ENCODE measurements at regions of chr16 and their contacts with region 1.

Region 1: GRCh38 chr16:11742539-11743307 is at the start of gene TXNDC11:
- DNase-seq: peak; percentile 99
- ATAC-seq: peak; percentile 81 to 82
- H3K4me3 ChIP-seq: peak within 1 kb of the TSS; percentile 77 to 99 (median 95)
- H3K27ac ChIP-seq: peak within 1 kb of the TSS; percentile 95 to 100 (median 99)
- H3K4me1 ChIP-seq: peaks cover 33 to 42% of the 10 kb centered on the region in 2 donors
- H3K27me3 ChIP-seq: no peaks in the 10 kb centered on the region
- CTCF ChIP-seq: no peak
- POLR2A ChIP-seq: peak; percentile 99 to 100
- total RNA-seq, gene TXNDC11: 35.2 to 64.5 (median 51.2) TPM

Region 2: GRCh38 chr16:11497851-11498289 is 244.9 kb before region 1 on chr16:
- in situ Hi-C with region 1: no loop called
- intact Hi-C with region 1: loop called (anchors 5 kb)
- DNase-seq: peak in 1 of 2 donors; percentile 59
- ATAC-seq: no peak
- H3K4me3 ChIP-seq: no peak overlapping the region
- H3K27ac ChIP-seq: peak overlapping the region; percentile 84 to 96 (median 92)
- H3K4me1 ChIP-seq: peaks cover 33 to 34% of the 10 kb centered on the region in 2 donors
- H3K27me3 ChIP-seq: no peaks in the 10 kb centered on the region
- CTCF ChIP-seq: no peak
- POLR2A ChIP-seq: no peak

Region 3: GRCh38 chr16:11667824-11668622 is 74.7 kb before region 1 on chr16 and contains the start of gene SNN:
- in situ Hi-C with region 1: no loop called
- intact Hi-C with region 1: loop called (anchors 2 kb)
- DNase-seq: peak; percentile 78 to 88
- ATAC-seq: peak; percentile 57 to 60
- H3K4me3 ChIP-seq: peak within 1 kb of the TSS; percentile 79 to 99 (median 88)
- H3K27ac ChIP-seq: peak within 1 kb of the TSS; percentile 91 to 99 (median 97)
- H3K4me1 ChIP-seq: peaks cover 36 to 41% of the 10 kb centered on the region in 2 donors
- H3K27me3 ChIP-seq: no peaks in the 10 kb centered on the region
- CTCF ChIP-seq: no peak
- POLR2A ChIP-seq: peak; percentile 67 to 73
- total RNA-seq, gene SNN: 22.5 to 94.5 (median 78.1) TPM

Region 4: GRCh38 chr16:11675561-11676511 is 66.9 kb before region 1 on chr16:
- in situ Hi-C with region 1: no loop called
- intact Hi-C with region 1: loop called (anchors 2 kb)
- DNase-seq: peak; percentile 95 to 99
- ATAC-seq: peak; percentile 65 to 75
- H3K4me3 ChIP-seq: no peak overlapping the region
- H3K27ac ChIP-seq: peak overlapping the region; percentile 91 to 99 (median 97)
- H3K4me1 ChIP-seq: peaks cover 97 to 98% of the 10 kb centered on the region in 2 donors
- H3K27me3 ChIP-seq: no peaks in the 10 kb centered on the region
- CTCF ChIP-seq: peak in 1 of 5 experiments; percentile 29
- POLR2A ChIP-seq: peak; percentile 56 to 59

Region 5: DNA sequence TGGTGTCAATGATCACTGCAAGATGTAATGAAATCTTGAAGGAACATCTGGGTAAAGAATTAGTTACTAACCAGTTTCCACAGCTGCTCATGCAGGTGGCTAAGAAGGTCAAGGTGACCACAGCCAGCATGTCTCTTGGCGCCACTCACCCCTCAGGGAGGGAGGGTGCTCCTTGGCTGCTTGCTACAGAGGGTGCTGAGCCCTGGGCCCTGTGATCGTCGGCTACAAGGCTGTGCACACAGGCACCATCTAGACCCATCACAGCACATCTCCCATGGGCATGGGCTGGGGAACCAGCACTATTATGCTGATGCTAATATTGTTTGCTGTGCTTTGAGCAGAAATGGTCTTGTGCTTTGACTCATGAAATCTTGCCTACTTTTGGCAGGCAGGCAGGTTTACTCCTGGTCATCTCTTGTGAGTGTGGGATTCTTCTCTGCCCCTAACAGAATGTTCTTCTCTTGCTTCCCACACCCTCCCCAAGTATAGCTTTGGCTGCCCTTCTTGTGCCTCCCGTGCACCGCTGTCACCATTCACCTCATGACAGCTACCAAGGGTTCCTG is 36.5 kb before region 1 on chr16:
- in situ Hi-C with region 1: no loop called
- intact Hi-C with region 1: loop called (anchors 2 kb)
- DNase-seq: peak; percentile 90 to 94
- ATAC-seq: peak; percentile 90 to 92
- H3K4me3 ChIP-seq: peak overlapping the region in 1 of 4 donors; percentile 1
- H3K27ac ChIP-seq: peak overlapping the region; percentile 89 to 95 (median 94)
- H3K4me1 ChIP-seq: peaks cover 61 to 64% of the 10 kb centered on the region in 2 donors
- H3K27me3 ChIP-seq: no peaks in the 10 kb centered on the region
- CTCF ChIP-seq: no peak
- POLR2A ChIP-seq: peak; percentile 52 to 75

Region 6: GRCh38 chr16:11851294-11852091 is 108.8 kb after region 1 on chr16 and contains the start of gene RSL1D1:
- in situ Hi-C with region 1: no loop called
- intact Hi-C with region 1: loop called (anchors 5 kb)
- DNase-seq: peak; percentile 85 to 91
- ATAC-seq: peak; percentile 96
- H3K4me3 ChIP-seq: peak within 1 kb of the TSS; percentile 87 to 98 (median 92)
- H3K27ac ChIP-seq: peak within 1 kb of the TSS; percentile 95 to 98 (median 96)
- H3K4me1 ChIP-seq: peaks cover 35 to 39% of the 10 kb centered on the region in 2 donors
- H3K27me3 ChIP-seq: no peaks in the 10 kb centered on the region
- CTCF ChIP-seq: peak in 2 of 5 experiments; percentile 7 to 30
- POLR2A ChIP-seq: peak; percentile 98 to 99
- total RNA-seq, gene RSL1D1: 215 to 302 (median 259) TPM

Region 7: DNA sequence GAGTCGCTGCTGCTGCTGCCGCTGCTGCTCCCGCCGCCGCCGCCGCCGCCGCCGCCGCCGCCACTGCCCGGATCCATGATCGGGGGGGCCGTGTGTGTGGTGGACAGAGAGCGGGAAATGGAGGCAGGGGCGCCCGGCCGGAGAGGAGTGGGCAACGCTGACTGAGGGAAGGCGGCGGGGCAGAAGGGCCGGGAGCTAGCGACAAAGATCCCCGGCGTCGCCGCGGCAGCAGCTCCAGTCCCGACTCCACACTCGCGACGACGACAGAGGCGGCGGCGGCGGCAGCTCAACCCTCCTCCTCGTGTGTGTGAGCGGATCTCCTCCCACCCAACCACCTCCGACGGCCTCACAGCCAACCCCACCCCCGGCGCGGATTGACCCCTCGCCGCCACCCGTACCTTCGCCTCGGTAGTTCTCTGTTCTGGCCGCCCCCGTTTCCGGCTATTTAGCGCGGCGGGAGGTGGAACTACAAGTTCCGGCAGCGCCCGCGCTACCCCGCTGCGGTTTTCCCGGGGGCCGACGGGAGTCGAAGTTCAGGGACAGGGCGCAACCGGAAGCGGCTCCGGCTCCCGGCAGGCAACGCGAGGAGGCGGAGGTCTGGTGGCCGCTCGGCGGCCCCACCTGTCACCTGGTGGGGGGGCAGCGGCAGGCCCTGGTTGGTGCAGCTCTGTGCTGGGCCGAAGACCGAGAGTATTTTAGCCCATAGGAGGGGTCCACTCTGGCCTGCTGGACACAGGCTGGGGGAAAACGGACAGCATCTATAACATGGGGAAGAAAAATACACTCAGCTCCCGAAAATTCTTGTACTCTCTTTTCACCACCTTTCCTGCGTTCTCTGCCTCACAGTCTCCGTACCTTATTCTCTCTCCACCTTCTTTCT is 173.2 kb after region 1 on chr16 and contains the start of gene GSPT1:
- in situ Hi-C with region 1: no loop called
- intact Hi-C with region 1: loop called (anchors 10 kb)
- DNase-seq: peak; percentile 99
- ATAC-seq: peak; percentile 94 to 97
- H3K4me3 ChIP-seq: peak within 1 kb of the TSS; percentile 81 to 89 (median 84)
- H3K27ac ChIP-seq: peak within 1 kb of the TSS; percentile 92 to 99 (median 96)
- H3K4me1 ChIP-seq: peaks cover 29 to 34% of the 10 kb centered on the region in 2 donors
- H3K27me3 ChIP-seq: no peaks in the 10 kb centered on the region
- CTCF ChIP-seq: peak in 4 of 5 experiments; percentile 17 to 58 (median 24)
- POLR2A ChIP-seq: peak; percentile 93 to 96
- total RNA-seq, gene GSPT1: 86.9 to 169 (median 139) TPM